ENCODE measurements at regions of chr13 and their contacts with region 1.

Region 1: DNA sequence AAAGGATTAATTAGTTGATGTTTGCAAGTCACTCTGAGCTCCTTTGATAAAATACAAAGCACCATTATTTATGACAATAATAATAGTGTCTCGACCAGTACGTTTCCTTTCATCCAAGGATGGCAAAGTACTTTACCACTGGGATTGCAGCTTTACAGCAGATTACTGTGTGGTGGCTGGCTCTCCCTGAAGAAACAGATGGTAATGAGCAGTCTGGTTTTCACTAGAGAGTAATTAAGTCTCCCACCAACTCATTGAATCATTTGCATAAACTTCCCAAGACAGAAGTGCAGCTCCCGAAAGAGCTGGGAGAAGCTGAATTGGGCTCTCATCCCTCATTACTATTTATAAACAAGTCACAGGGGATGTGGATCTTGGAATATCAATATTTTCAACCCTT is 48.7 kb downstream of the KLF5 start:
- DNase-seq: no peak
- H3K4me3 ChIP-seq: no peak overlapping the region
- H3K27ac ChIP-seq: no peak overlapping the region
- H3K4me1 ChIP-seq: no peaks in the 10 kb centered on the region
- H3K27me3 ChIP-seq: no peaks in the 10 kb centered on the region
- CTCF ChIP-seq: no peak
- EP300 ChIP-seq: no peak
- POLR2A ChIP-seq: no peak

Region 2: DNA sequence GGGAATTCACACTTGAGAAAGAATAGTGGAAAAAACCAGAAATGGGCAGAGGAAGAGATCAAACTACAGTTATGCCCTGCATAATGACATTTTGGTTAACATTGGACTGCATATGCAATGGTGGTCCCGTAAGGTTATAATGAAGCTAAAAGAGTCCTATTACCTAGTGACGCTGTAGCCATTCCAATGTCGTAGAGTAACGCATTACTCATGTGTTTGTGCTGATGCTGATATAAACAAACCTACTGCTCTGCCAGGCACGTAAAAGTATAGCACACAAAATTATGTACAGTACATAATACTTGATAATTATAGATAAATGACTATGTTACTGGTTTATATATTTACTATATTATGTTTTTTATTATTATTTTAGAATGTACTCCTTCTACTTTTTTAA is 72.4 kb after region 1 on chr13:
- intact Hi-C with region 1: no loop called
- DNase-seq: no peak
- H3K4me3 ChIP-seq: no peak overlapping the region
- H3K27ac ChIP-seq: no peak overlapping the region
- H3K4me1 ChIP-seq: no peaks in the 10 kb centered on the region
- H3K27me3 ChIP-seq: no peaks in the 10 kb centered on the region
- CTCF ChIP-seq: no peak
- EP300 ChIP-seq: no peak
- POLR2A ChIP-seq: no peak

Region 3: DNA sequence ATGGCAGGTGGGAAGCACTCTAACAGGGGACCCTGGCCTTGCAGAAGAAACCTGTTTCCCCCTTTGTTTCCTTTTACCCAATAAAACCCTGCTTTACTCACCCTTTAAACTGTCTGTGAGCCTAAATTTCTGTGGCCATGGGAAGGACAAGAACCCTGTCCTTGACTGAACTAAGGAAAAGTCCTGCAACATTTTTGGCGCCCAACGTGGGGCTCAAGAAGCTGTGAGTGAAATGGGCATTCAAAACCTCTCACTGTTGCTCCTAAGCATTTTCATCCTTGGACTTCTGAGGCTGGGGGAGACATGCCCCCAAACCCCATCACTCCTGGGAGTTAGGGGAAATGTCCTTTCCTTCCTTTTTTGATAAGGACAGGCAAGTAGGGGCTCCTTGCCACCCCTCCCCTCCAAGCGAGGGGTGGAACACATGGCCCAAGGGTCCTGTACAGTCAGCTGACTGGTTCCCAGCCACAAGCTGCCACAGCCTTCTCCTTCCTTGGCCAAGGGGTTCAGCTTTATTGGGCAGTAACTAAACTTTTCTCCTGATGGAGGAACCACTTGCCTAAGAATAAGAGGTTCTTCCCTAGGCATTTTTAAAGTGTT is 332.9 kb after region 1 on chr13:
- intact Hi-C with region 1: loop called in 1 of 4 experiments (anchors 5 kb)
- DNase-seq: no peak
- H3K4me3 ChIP-seq: no peak overlapping the region
- H3K27ac ChIP-seq: no peak overlapping the region
- H3K4me1 ChIP-seq: no peaks in the 10 kb centered on the region
- H3K27me3 ChIP-seq: no peaks in the 10 kb centered on the region
- CTCF ChIP-seq: no peak
- EP300 ChIP-seq: no peak
- POLR2A ChIP-seq: no peak

Measured in ovary (tissue), 10 donors.